PC-9 (cell line): ENCODE measurements at regions of chr19 and their contacts with region 1.

Region 1: GRCh38 chr19:6540918-6541689 is 10.3 kb downstream of the TNFSF9 start:
- DNase-seq: no peak
- H3K4me3 ChIP-seq: no peak overlapping the region
- H3K27ac ChIP-seq: no peak overlapping the region
- H3K4me1 ChIP-seq: peaks cover 13% of the 10 kb centered on the region
- H3K27me3 ChIP-seq: no peaks in the 10 kb centered on the region
- CTCF ChIP-seq: no peak

Region 2: GRCh38 chr19:6453951-6454565 is 87.0 kb before region 1 on chr19:
- CTCF ChIA-PET with region 1: no interaction called
- POLR2A ChIA-PET with region 1: no interaction called
- intact Hi-C with region 1: no loop called
- DNase-seq: no peak
- H3K4me3 ChIP-seq: no peak overlapping the region
- H3K27ac ChIP-seq: no peak overlapping the region
- H3K4me1 ChIP-seq: no peaks in the 10 kb centered on the region
- H3K27me3 ChIP-seq: no peaks in the 10 kb centered on the region
- CTCF ChIP-seq: no peak

Region 3: DNA sequence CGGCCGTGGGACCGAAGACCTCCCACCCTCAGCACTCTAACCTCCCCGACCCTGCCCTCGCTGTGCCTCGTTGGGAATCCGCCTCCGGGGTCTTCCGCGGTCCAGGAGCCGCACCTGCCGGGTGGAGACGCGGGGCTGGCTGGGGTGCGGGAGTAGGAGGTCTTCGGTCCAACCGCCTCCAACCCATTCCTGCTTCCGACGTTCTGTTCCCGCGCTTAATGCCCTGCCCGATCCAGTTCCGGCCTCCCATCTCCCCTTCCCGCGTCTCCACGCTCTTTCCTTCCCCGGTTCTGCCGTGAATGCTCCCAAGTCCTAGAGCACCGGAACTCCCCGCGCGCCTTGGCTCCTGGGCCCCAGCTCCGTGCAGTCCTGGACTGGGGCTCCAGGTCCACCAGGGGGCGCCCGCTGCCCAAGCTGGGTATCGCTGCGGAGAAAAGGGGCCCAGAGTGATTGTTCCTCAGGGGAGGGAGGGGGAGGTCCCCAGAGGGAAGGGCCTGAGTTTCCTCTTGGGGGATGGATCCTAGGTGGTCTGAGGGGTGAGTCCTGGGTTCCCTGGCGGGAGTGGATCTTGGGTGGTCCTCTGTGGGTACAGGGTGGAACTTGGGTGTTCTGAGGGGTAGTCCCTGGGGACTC is 24.3 kb before region 1 on chr19:
- CTCF ChIA-PET with region 1: interaction called, 3 read pairs
- POLR2A ChIA-PET with region 1: interaction called, 26 read pairs
- intact Hi-C with region 1: no loop called
- DNase-seq: peak; percentile 43 to 76
- H3K4me3 ChIP-seq: peak overlapping the region; percentile 57
- H3K27ac ChIP-seq: no peak overlapping the region
- H3K4me1 ChIP-seq: no peaks in the 10 kb centered on the region
- H3K27me3 ChIP-seq: no peaks in the 10 kb centered on the region
- CTCF ChIP-seq: peak; percentile 93

Region 4: DNA sequence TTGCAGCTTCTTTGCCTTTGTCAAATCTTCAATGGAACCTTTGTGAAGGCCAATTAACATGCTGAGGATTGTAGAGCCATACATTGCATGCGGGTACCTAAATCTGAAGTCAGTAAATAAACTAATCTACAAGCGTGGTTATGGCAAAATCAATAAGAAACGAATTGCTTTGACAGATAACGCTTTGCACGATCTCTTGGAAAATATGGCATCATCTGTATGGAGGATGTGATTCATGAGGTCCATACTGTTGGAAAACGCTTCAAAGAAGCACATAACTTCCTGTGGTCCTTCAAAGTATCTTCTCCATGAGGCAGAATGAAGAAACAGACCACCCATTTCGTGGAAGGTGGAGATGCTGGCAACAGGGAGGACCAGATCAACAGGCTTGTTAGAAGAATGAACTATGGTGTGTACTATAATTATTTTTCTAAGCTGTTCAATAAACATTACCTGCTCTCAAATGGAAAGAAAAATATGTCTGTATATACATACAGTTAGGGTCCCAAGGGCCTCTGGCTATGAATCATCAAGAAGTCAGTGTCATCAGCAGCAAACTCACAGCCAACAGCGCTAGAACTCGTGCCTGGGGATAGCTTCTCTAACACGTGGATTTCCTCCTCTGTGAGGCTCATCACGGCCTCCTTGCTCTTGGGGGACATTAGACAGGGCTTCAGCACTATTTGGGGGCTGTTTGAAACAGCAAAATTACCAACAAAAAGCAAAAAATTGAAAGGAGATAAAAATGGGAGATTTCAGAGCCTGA is 52.7 kb after region 1 on chr19:
- CTCF ChIA-PET with region 1: no interaction called
- POLR2A ChIA-PET with region 1: interaction called, 13 read pairs
- intact Hi-C with region 1: no loop called
- DNase-seq: no peak
- H3K4me3 ChIP-seq: no peak overlapping the region
- H3K27ac ChIP-seq: no peak overlapping the region
- H3K4me1 ChIP-seq: no peaks in the 10 kb centered on the region
- H3K27me3 ChIP-seq: peaks cover 6% of the 10 kb centered on the region; the same call in 1 of the 2 replicates
- CTCF ChIP-seq: no peak